ENCODE measurements at regions of chrX and their contacts with region 1.

Region 1: GRCh38 chrX:48945516-48946348 is 11.7 kb downstream of the OTUD5 start:
- DNase-seq: peak; percentile 67
- ATAC-seq: peak; percentile 27
- H3K4me3 Mint-ChIP-seq: no peak overlapping the region
- H3K27ac Mint-ChIP-seq: peak overlapping the region; percentile 39
- H3K4me1 Mint-ChIP-seq: peaks cover 52% of the 10 kb centered on the region
- H3K27me3 Mint-ChIP-seq: no peaks in the 10 kb centered on the region
- CTCF ChIP-seq: peak; percentile 69

Region 2: DNA sequence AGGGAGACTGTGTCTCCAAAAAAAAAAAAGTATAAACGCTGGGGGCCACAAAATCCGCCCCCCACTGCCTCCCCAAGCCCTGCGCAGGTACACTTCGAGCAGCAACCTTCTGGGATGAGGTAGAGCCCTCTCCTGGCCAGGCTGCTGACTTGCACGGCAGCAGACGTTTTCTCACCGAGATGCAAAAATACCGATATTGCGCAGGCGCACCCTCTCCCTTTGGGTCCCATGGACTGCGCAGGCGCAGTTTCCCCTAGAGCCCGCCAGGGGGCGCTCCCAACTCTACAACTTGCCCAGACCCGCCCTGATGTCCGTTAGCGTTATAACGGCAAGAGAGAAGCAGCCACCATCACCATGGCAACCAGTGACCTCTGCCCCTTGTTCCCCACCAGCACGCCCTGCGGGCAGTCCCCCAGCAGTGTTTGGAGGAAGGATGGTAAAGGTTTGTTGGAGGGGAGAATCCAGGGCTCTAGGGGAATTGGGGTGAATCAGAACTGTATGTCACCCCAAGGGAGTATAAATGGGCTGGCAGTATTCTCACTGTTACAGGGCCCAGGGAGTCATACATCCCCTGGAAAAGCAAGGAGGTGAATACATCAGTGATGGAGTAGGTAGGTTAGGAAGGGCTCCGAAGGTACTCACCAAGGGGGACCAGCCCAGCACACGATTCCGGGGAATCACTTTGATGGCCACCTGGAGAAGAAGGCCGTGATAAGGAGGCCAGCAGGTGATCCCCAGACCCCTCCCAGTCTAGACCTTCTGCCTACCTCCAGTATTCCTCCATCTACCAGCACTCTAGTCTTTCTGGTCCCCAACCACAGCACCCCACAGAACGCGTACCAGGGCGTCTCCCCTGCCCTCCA is 28.4 kb before region 1 on chrX:
- CTCF ChIA-PET with region 1: interaction called, 4 read pairs
- POLR2A ChIA-PET with region 1: interaction called, 176 read pairs
- intact Hi-C with region 1: no loop called
- DNase-seq: peak; percentile 94
- ATAC-seq: peak; percentile 46
- H3K4me3 Mint-ChIP-seq: peak overlapping the region; percentile 96
- H3K27ac Mint-ChIP-seq: peak overlapping the region; percentile 98
- H3K4me1 Mint-ChIP-seq: peaks cover 44% of the 10 kb centered on the region
- H3K27me3 Mint-ChIP-seq: no peaks in the 10 kb centered on the region
- CTCF ChIP-seq: peak; percentile 83

Region 3: GRCh38 chrX:49019599-49020249 is 74.0 kb after region 1 on chrX:
- CTCF ChIA-PET with region 1: no interaction called
- POLR2A ChIA-PET with region 1: no interaction called
- intact Hi-C with region 1: no loop called
- DNase-seq: no peak
- ATAC-seq: no peak
- H3K4me3 Mint-ChIP-seq: no peak overlapping the region
- H3K27ac Mint-ChIP-seq: no peak overlapping the region
- H3K4me1 Mint-ChIP-seq: no peaks in the 10 kb centered on the region
- H3K27me3 Mint-ChIP-seq: no peaks in the 10 kb centered on the region
- CTCF ChIP-seq: no peak

Measured in activated CD8-positive, alpha-beta T cell treated with anti-CD3 and anti-CD28 coated beads for 36 hours (primary cell).